PC-9 (cell line): ENCODE measurements at regions of chr1 and their contacts with region 1.

Region 1: GRCh38 chr1:98053471-98054366 is 132.9 kb upstream of the DPYD start:
- DNase-seq: peak in 1 of 2 experiments; percentile 82
- H3K4me3 ChIP-seq: peak overlapping the region; percentile 58
- H3K27ac ChIP-seq: no peak overlapping the region
- H3K4me1 ChIP-seq: no peaks in the 10 kb centered on the region
- H3K27me3 ChIP-seq: no peaks in the 10 kb centered on the region
- CTCF ChIP-seq: peak; percentile 94

Region 2: GRCh38 chr1:97137862-97138514 is 915.7 kb before region 1 on chr1:
- CTCF ChIA-PET with region 1: no interaction called
- POLR2A ChIA-PET with region 1: no interaction called
- intact Hi-C with region 1: loop called (anchors 1 kb)
- DNase-seq: peak in 1 of 2 experiments; percentile 10
- H3K4me3 ChIP-seq: no peak overlapping the region
- H3K27ac ChIP-seq: no peak overlapping the region
- H3K4me1 ChIP-seq: no peaks in the 10 kb centered on the region
- H3K27me3 ChIP-seq: no peaks in the 10 kb centered on the region
- CTCF ChIP-seq: peak; percentile 76

Region 3: GRCh38 chr1:97533358-97533757 is 520.4 kb before region 1 on chr1:
- CTCF ChIA-PET with region 1: no interaction called
- POLR2A ChIA-PET with region 1: no interaction called
- intact Hi-C with region 1: loop called (anchors 5 kb)
- DNase-seq: no peak
- H3K4me3 ChIP-seq: no peak overlapping the region
- H3K27ac ChIP-seq: no peak overlapping the region
- H3K4me1 ChIP-seq: no peaks in the 10 kb centered on the region
- H3K27me3 ChIP-seq: no peaks in the 10 kb centered on the region
- CTCF ChIP-seq: no peak

Region 4: DNA sequence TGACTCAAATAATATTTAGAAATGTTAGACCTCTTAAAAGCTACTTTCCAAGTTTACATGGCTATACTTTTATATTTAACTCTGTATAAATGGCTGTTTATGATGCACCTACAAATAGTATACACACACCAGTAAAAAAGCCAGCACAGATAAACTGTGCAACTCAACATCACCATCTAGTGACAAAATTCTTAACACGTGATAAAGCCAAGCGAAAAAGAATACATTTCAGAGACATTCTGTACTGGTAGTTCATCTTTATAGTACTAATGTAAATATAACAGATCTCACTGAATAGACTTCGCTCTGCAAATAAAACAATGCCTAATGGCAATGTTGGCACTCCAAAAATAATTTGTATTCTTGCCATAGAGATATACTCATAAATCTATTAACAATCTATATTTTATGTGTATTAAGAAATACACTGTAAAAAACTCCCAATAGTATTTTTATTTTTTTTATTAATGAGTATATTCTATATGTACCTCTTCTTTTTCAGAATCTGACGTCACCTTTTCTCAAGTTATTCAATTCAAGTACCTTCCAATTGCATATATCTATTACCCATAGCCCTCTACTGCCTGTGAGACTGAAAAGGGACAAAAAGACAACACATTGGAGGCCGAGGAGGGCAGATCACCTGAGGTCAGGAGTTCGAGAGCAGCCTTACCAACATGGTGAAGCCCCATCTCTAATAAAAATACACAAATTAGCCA is 233.1 kb before region 1 on chr1:
- CTCF ChIA-PET with region 1: no interaction called
- POLR2A ChIA-PET with region 1: no interaction called
- intact Hi-C with region 1: loop called (anchors 1 kb)
- DNase-seq: peak in 1 of 2 experiments; percentile 43
- H3K4me3 ChIP-seq: no peak overlapping the region
- H3K27ac ChIP-seq: no peak overlapping the region
- H3K4me1 ChIP-seq: no peaks in the 10 kb centered on the region
- H3K27me3 ChIP-seq: no peaks in the 10 kb centered on the region
- CTCF ChIP-seq: peak; percentile 78

Region 5: DNA sequence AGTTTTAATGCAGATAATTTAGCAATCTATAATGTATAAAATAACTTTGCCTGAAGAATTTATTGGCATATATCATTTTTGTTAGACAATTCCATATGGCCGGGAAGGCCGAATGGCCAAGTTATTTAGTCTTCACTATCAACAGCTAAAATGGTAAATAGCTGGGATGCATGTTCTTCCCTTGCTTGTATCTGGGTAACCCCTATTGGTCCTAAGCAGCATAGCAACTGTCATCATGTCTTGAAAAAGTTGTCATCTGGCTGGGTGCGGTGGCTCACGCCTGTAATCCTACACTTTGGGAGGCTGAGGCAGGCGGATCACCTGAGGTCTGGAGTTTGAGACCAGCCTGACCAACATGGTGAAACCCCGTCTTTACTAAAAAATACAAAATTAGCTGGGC is 207.1 kb after region 1 on chr1:
- CTCF ChIA-PET with region 1: no interaction called
- POLR2A ChIA-PET with region 1: no interaction called
- intact Hi-C with region 1: loop called (anchors 1 kb)
- DNase-seq: no peak
- H3K4me3 ChIP-seq: no peak overlapping the region
- H3K27ac ChIP-seq: no peak overlapping the region
- H3K4me1 ChIP-seq: peaks cover 15% of the 10 kb centered on the region
- H3K27me3 ChIP-seq: no peaks in the 10 kb centered on the region
- CTCF ChIP-seq: no peak

Region 6: DNA sequence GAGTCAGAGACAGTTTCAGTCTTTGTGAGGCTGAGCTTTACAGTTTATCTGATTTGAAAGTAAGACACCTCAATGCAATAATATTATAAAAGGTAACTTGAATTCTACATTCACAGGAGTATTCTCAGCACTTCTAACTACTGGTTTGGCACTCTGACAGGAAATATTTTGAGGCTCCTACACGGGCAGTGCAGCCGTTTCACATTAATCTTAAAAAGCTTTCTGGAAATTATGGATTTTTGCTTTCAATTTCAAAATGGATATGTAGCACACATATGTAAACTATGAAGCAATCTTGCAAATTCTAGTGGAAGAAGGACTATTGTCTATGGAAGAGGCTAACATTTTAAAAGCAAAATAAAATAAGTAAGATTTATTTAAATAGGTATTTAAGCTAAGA is 344.9 kb after region 1 on chr1:
- CTCF ChIA-PET with region 1: no interaction called
- POLR2A ChIA-PET with region 1: no interaction called
- intact Hi-C with region 1: no loop called
- DNase-seq: no peak
- H3K4me3 ChIP-seq: no peak overlapping the region
- H3K27ac ChIP-seq: no peak overlapping the region
- H3K4me1 ChIP-seq: no peaks in the 10 kb centered on the region
- H3K27me3 ChIP-seq: no peaks in the 10 kb centered on the region
- CTCF ChIP-seq: no peak